Left ventricle myocardium inferior (tissue), 1 donor: ENCODE measurements at regions of chr11 and their contacts with region 1.

Region 1: DNA sequence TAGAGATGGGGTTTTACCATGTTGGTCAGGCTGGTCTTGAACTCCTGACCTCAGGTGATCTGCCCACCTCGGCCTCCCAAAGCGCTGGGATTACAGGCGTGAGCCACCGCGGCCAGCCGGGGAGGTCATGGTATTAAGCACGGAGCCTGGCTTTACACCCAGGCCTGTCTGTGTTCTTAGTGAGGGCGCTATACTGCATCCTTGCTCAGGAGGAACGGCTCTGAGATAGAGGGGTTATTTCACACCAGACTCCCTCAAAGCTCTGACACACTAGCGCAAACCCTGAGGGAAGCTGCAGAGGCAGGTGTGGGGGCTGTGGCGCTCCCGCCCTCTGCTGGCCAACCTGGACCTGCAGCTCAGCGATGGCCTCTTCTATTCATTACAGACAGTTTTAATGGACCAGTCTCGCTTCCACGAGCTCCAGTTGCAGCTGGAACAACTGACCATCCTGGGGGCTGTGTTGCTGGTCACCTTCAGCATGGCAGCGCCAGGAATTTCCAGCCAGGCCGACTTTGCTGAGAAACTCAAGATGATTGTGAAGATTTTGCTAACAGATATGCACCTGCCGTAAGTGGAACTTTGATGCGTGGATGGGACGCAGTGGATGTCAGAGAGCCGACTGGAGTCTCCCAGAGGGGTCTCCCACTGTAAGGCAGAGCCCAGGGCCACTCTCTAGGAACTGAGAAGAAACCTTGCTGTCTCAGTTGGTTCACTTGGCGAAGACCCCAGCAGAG is 26.2 kb downstream of the TCP11L1 start:
- DNase-seq: peak; percentile 57
- H3K4me3 ChIP-seq: no peak overlapping the region
- H3K27ac ChIP-seq: no peak overlapping the region
- H3K4me1 ChIP-seq: peaks cover 24% of the 10 kb centered on the region
- H3K27me3 ChIP-seq: no peaks in the 10 kb centered on the region
- CTCF ChIP-seq: peak; percentile 88

Region 2: DNA sequence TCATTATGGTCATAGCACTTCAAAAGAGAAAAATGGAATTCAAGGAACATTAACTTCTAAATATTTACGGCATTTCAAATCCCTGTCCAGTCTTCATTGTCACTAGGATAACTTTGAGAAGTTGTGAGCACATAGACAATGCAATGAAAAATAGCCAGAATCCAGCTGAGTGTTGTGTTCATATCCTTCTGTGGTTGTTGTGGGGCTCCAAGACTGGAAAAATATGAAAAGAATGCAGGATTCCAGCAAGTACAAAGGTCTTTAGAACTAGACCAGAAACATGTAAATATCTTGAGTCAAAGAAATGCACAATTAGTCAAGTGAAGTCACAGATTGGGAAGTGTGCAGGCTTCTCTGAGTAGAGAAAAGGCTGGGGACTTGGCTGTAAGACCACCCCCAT is 698.9 kb before region 1 on chr11:
- intact Hi-C with region 1: no loop called
- DNase-seq: no peak
- H3K4me3 ChIP-seq: no peak overlapping the region
- H3K27ac ChIP-seq: no peak overlapping the region
- H3K4me1 ChIP-seq: no peaks in the 10 kb centered on the region
- H3K27me3 ChIP-seq: peaks cover 14% of the 10 kb centered on the region
- CTCF ChIP-seq: no peak

Region 3: DNA sequence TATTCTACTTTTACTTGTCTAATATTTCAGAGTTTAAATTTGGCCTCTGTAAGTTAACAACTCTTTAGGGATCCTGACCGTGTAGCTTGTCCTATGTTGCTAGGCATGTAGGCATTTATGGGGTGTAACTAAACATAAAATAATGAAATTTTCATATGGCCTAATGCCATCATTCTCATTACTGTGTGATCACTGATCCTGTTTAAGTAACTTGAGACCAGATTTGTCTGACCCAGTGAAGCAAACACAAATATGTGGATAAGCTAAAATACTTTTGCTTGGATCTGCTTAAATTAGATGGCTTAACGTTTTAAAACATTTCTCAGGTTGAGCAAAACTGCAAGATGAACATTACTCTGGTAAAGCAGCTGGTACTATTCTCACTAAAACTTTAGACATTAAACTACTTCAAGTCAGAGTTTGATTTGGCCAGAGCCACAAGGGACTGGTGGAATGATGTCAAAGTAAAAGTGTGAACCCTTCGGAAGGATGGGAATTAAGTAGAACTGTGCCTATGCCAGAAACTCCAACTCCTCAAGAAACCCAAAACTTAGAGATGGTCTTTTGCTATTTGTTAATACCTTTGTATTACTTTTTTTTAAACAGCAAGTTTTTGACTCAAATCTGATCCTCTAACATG is 160.5 kb before region 1 on chr11:
- intact Hi-C with region 1: no loop called
- DNase-seq: no peak
- H3K4me3 ChIP-seq: no peak overlapping the region
- H3K27ac ChIP-seq: no peak overlapping the region
- H3K4me1 ChIP-seq: peaks cover 13% of the 10 kb centered on the region
- H3K27me3 ChIP-seq: no peaks in the 10 kb centered on the region
- CTCF ChIP-seq: no peak

Region 4: DNA sequence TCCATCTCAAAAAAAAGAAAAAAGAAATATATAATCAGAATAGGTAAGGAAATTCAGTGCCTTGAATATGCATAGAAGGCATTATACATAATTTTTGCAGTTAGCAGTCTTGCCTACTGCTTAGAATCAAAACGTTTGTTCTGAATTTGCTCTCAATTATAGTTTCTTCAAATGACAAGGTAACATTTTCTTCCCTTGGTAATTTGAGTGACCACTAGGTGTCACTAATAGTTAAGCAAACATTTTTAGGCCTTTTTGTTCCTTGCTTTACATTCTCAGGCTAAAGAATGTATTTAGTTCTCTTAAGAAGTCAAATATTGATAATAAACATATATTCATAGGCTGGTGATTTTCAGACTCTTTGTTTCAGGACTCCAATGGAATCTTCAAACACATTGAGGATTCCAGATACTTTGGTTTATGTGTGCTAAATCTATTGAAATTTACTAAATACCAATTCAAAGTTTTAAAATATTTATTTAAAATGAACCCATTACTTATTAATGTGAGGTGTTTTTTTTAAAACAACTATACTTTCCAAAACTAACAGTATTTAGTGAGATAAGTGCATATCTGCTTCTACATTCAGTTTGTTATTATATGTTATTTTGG is 105.0 kb before region 1 on chr11:
- intact Hi-C with region 1: loop called (anchors 5 kb)
- DNase-seq: no peak
- H3K4me3 ChIP-seq: no peak overlapping the region
- H3K27ac ChIP-seq: no peak overlapping the region
- H3K4me1 ChIP-seq: no peaks in the 10 kb centered on the region
- H3K27me3 ChIP-seq: no peaks in the 10 kb centered on the region
- CTCF ChIP-seq: peak; percentile 76

Region 5: GRCh38 chr11:33116535-33116934 is 50.9 kb after region 1 on chr11:
- intact Hi-C with region 1: no loop called
- DNase-seq: no peak
- H3K4me3 ChIP-seq: no peak overlapping the region
- H3K27ac ChIP-seq: no peak overlapping the region
- H3K4me1 ChIP-seq: no peaks in the 10 kb centered on the region
- H3K27me3 ChIP-seq: no peaks in the 10 kb centered on the region
- CTCF ChIP-seq: no peak